Prostate gland (tissue), 2 donors: ENCODE measurements at regions of chr7 and their contacts with region 1.

Region 1: DNA sequence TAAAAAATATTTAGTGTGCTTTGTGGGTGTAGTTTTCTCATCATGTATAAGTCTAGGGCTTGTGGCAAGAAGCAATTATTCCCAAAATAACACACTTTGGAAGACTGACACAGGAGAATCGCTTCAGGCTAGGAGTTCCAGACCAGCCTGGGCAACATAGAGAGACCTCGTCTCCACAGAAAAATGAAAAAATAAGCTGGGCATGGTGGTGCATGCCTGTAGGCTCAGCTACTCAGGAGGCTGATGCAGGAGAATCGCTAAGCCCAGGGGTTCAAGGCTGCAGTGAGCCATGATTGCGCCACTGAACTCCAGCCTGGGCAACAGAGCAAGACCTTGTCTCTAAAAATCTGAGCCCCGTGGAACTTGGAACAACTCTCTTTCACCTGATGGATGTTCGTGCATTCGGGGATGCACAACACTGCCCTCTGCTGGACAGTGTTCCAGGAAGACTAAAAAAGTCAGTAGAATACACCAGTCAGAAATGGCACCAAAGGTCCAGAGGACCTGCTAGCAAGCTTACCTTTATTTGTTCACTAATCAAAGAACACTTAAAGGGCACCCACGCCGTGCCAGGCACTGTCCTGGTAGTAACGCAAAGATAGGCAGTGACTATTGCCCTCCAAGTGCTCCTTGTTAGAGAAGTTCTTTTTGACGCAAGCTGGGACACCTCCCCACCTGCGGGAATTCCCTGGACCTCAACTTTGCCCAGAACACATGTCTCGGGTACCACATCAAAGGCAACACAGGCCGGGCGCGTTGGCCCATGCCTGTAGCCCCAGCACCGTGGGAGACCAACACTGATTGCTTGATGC is 81.9 kb upstream of the CALN1 start:
- DNase-seq: peak; percentile 47
- H3K4me3 ChIP-seq: no peak overlapping the region
- H3K27ac ChIP-seq: no peak overlapping the region
- H3K4me1 ChIP-seq: no peaks in the 10 kb centered on the region
- H3K27me3 ChIP-seq: no peaks in the 10 kb centered on the region
- CTCF ChIP-seq: peak; percentile 19 to 70 (median 40)
- POLR2A ChIP-seq: no peak

Region 2: GRCh38 chr7:71752171-71752935 is 741.7 kb before region 1 on chr7:
- intact Hi-C with region 1: loop called (anchors 10 kb)
- DNase-seq: no peak
- H3K4me3 ChIP-seq: no peak overlapping the region
- H3K27ac ChIP-seq: no peak overlapping the region
- H3K4me1 ChIP-seq: no peaks in the 10 kb centered on the region
- H3K27me3 ChIP-seq: peaks cover 5% of the 10 kb centered on the region
- CTCF ChIP-seq: peak in 3 of 4 experiments; percentile 44 to 59 (median 50)
- POLR2A ChIP-seq: no peak